Activated CD4-positive, alpha-beta T cell treated with anti-CD3 and anti-CD28 coated beads for 36 hours (primary cell): ENCODE measurements at regions of chr10 and their contacts with region 1.

Region 1: DNA sequence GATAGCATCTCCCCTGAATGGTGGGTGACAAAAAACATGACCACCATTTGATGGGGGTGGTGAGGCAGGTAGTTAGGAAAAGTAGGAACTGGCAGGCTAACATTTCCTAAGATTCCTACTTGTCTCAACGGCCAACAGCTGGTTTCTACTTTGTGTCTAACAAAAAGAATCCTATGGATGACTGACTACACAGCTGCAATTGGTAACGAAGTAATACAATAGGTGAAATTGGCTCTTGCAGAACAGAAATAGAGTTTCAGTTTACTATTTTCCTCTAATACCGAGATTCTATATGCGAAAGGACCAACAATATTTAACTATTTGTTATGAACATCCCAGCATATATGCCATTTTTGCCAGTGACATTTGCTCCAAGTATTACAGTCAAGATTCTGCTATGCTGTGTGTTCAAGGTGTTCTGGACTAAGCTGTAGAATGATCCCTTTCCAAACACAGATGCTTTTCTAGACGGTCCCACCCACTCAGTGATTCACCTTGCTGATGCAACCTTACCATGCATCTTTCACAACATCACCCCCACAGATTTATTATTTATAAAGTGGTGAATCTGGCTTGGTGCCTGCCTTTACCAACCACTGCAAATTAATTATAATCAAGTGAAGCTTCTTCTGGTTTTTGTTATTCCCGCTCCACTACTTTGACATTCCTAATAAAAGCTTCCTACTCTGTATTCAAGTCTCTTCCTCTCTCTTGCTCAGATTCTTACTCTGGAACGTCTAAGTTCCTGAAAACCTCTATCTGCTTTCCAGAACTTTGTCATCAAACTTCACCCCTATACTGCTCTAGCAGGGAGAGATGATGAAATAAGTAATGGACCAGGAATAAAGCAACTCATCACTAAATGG is 16.8 kb downstream of the BBIP1 start:
- DNase-seq: peak; percentile 75
- ATAC-seq: peak; percentile 59
- H3K4me3 Mint-ChIP-seq: no peak overlapping the region
- H3K27ac Mint-ChIP-seq: peak overlapping the region; percentile 93
- H3K4me1 Mint-ChIP-seq: peaks cover 49% of the 10 kb centered on the region
- H3K27me3 Mint-ChIP-seq: no peaks in the 10 kb centered on the region

Region 2: DNA sequence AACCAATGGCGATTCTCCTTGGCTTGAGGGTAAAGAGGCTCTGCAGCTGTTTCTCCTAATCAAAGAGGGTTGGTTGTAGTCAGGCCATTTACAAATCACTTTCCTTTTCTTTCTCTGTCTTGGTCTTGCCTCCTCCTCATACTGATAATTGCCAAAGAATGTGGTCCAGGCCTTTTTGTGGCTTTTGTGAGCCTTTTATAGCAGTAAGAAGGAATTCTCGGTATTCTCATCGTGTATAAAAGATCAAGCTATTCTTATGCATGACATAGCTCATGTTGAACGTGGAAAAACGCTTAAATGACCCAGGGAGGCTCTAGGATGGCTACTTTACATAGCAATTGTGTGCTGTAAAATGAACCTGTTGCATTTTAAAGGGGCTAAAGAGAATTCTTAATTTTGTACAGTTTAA is 195.5 kb before region 1 on chr10:
- CTCF ChIA-PET with region 1: no interaction called
- POLR2A ChIA-PET with region 1: no interaction called
- intact Hi-C with region 1: no loop called
- DNase-seq: no peak
- ATAC-seq: no peak
- H3K4me3 Mint-ChIP-seq: no peak overlapping the region
- H3K27ac Mint-ChIP-seq: no peak overlapping the region
- H3K4me1 Mint-ChIP-seq: no peaks in the 10 kb centered on the region
- H3K27me3 Mint-ChIP-seq: no peaks in the 10 kb centered on the region

Region 3: GRCh38 chr10:110820321-110820814 is 81.8 kb before region 1 on chr10:
- CTCF ChIA-PET with region 1: no interaction called
- POLR2A ChIA-PET with region 1: no interaction called
- intact Hi-C with region 1: no loop called
- DNase-seq: no peak
- ATAC-seq: no peak
- H3K4me3 Mint-ChIP-seq: no peak overlapping the region
- H3K27ac Mint-ChIP-seq: no peak overlapping the region
- H3K4me1 Mint-ChIP-seq: peaks cover 25% of the 10 kb centered on the region
- H3K27me3 Mint-ChIP-seq: no peaks in the 10 kb centered on the region

Region 4: GRCh38 chr10:110912374-110912773 is 10.2 kb after region 1 on chr10:
- CTCF ChIA-PET with region 1: interaction called, 21 read pairs
- POLR2A ChIA-PET with region 1: interaction called, 24 read pairs
- intact Hi-C with region 1: no loop called
- DNase-seq: no peak
- ATAC-seq: no peak
- H3K4me3 Mint-ChIP-seq: no peak overlapping the region
- H3K27ac Mint-ChIP-seq: no peak overlapping the region
- H3K4me1 Mint-ChIP-seq: peaks cover 27% of the 10 kb centered on the region
- H3K27me3 Mint-ChIP-seq: no peaks in the 10 kb centered on the region

Region 5: DNA sequence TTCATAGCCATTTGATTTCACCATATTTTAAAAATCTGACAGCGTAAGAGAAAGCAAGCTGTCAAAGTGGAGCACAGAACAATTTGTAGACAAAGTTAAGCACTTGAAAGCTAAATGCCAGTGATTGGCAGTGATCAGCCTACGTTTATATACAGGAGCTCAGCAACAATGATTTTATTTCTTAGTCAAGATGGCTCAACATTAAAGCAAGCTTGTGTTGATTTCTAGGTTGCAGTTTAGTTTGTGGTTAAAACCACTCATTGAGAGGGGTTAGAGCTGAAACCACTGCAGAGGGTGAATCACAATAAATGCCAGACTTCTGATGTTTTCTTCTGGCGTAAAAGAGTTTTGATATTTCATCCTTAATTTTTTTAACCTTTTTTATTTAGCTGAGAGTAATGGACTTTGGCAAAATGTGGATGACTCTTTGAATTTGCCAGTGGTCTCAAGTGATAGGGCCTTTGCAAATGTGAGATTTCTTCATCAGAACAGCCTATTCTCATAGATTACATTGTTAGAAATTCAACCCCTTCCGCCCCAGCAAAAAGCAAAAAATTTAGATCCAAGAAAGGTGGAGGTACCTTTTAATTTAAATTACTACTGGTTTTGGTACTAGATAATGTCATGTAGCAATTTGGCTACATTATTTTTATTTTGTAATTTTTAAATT is 91.0 kb after region 1 on chr10:
- CTCF ChIA-PET with region 1: interaction called, 3 read pairs
- POLR2A ChIA-PET with region 1: no interaction called
- intact Hi-C with region 1: loop called in 1 of 2 experiments (anchors 5 kb)
- DNase-seq: peak; percentile 24
- ATAC-seq: peak; percentile 97
- H3K4me3 Mint-ChIP-seq: peak overlapping the region; percentile 47
- H3K27ac Mint-ChIP-seq: peak overlapping the region; percentile 13
- H3K4me1 Mint-ChIP-seq: peaks cover 45% of the 10 kb centered on the region
- H3K27me3 Mint-ChIP-seq: no peaks in the 10 kb centered on the region

Region 6: GRCh38 chr10:112151524-112152039 is 1249.4 kb after region 1 on chr10:
- CTCF ChIA-PET with region 1: no interaction called
- POLR2A ChIA-PET with region 1: no interaction called
- intact Hi-C with region 1: no loop called
- DNase-seq: no peak
- ATAC-seq: no peak
- H3K4me3 Mint-ChIP-seq: no peak overlapping the region
- H3K27ac Mint-ChIP-seq: no peak overlapping the region
- H3K4me1 Mint-ChIP-seq: no peaks in the 10 kb centered on the region
- H3K27me3 Mint-ChIP-seq: no peaks in the 10 kb centered on the region